Dorsolateral prefrontal cortex (tissue), 120 donors: ENCODE measurements at regions of chr22 and their contacts with region 1.

Region 1: DNA sequence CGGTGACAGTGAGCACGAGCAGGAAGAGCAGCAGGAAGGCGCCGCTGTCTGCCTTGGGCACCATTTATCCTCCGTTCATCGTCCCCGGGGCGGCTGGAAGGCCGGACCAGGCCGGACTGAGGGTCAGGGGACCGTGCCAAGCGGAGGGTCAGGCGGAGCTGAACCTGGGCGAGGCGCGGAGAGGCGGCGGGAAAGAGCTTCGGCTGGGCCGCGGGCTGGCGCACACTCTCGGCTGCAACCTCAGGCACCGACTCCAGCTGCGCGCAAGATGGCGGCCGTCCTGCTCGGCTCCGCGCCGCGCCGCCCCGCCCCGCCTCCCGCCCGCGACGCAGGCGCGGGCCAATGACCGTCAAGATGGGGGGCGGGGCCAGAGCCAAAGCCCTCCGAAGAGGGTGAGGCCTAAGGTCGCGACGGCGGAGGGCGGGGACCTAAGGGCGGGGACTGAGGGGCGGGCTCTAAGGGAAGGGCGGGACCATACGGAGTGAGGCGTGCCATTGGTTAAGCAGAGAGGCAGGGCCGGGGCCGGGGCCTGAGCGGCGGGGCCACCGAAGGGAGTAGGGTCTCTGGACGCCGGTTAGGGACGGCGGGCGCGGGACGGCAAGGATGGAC is at the start of gene DGCR2:
- DNase-seq: peak; percentile 91 to 98 (median 96)
- H3K4me3 ChIP-seq: peak within 1 kb of the TSS; percentile 68 to 100 (median 93)
- H3K27ac ChIP-seq: peak within 1 kb of the TSS in 56 of 59 donors; percentile 45 to 96 (median 88)
- H3K27me3 ChIP-seq: no peaks in the 10 kb centered on the region
- CTCF ChIP-seq: peak in 13 of 56 donors; percentile 5 to 31 (median 12)
- total RNA-seq, gene DGCR2: 71.8 to 123 (median 94.1) TPM

Region 2: GRCh38 chr22:19143967-19144400 is 21.7 kb after region 1 on chr22:
- intact Hi-C with region 1: loop called in 1 of 2 experiments (anchors 1 kb)
- DNase-seq: peak in 1 of 10 donors; percentile 22
- H3K4me3 ChIP-seq: peak overlapping the region; percentile 55 to 100 (median 93)
- H3K27ac ChIP-seq: peak overlapping the region in 51 of 59 donors; percentile 16 to 89 (median 69)
- H3K27me3 ChIP-seq: peaks cover 0 to 17% (median 12%) of the 10 kb centered on the region in 45 donors
- CTCF ChIP-seq: no peak